ENCODE measurements at regions of chr2 and their contacts with region 1.

Region 1: DNA sequence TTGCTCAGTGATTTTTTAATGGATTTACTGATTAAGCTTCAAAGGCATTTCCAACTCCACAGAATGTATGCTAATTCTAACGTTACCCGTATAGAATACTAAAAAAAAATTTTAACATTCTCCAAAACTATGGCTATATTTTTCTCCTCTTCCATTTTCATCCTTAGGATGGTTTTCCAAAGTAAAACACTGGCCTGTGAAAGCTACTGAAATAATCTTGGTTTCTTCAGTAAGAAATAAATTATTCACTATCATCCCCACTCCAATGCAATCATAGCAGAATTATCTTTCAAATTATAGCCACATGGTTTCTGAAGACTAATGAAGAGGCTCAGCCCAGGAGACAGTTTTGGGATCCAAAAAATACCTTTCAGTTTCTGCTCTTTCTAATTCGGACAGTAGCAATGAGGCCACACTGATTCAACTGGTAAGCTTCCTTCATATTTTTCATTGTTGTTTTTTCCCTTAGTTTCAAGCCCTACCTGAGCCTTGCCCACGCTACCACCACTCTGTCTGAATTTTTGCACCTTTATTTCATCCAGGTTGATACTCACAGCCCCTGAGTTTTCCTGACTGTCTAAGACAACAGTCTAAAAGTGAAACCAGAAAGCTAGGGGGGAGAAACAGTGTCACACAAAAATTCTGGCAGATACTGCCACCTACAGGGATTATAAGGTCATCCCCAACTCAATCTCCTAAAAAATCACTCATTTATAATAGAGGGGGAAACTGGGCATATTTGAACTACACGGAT is 887.9 kb downstream of the NRXN1 start:
- DNase-seq: peak in 2 of 6 donors; percentile 13
- ATAC-seq: peak; percentile 83 to 99 (median 96)
- H3K4me3 ChIP-seq: peak overlapping the region in 2 of 4 donors; percentile 16 to 37
- H3K27ac ChIP-seq: no peak overlapping the region
- H3K4me1 ChIP-seq: no peaks in the 10 kb centered on the region
- H3K27me3 ChIP-seq: no peaks in the 10 kb centered on the region
- CTCF ChIP-seq: peak; percentile 16 to 51 (median 23)

Region 2: DNA sequence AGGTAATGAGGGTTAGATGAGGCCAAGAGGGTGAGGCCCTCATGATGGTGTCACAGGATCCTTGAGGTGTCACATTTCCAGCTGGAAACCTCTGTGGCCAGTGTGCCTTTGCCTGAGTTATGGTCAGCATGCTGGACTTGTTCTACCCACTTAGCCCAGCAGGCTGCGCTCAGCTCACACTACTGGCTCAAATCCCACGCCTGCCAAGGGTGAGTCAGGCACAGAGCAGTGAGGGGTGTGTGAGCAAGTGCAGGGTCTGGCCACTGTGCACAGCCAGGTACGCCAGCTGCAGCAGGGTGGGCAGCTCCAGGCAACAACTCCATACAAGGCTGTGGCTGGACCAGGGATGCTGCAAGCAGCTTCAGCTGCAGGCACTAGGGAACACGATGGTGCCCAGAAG is 373.1 kb before region 1 on chr2:
- intact Hi-C with region 1: loop called in 1 of 3 experiments (anchors 10 kb)
- DNase-seq: peak; percentile 25 to 75 (median 62)
- ATAC-seq: peak; percentile 78 to 95 (median 94)
- H3K4me3 ChIP-seq: no peak overlapping the region
- H3K27ac ChIP-seq: no peak overlapping the region
- H3K4me1 ChIP-seq: no peaks in the 10 kb centered on the region
- H3K27me3 ChIP-seq: no peaks in the 10 kb centered on the region
- CTCF ChIP-seq: peak in 3 of 4 donors; percentile 14 to 39 (median 33)

Region 3: GRCh38 chr2:50333529-50334228 is 189.7 kb after region 1 on chr2:
- intact Hi-C with region 1: no loop called
- DNase-seq: no peak
- ATAC-seq: no peak
- H3K4me3 ChIP-seq: no peak overlapping the region
- H3K27ac ChIP-seq: no peak overlapping the region
- H3K4me1 ChIP-seq: no peaks in the 10 kb centered on the region
- H3K27me3 ChIP-seq: peaks cover 0 to 6% (median 0%) of the 10 kb centered on the region in 4 donors
- CTCF ChIP-seq: no peak

Region 4: GRCh38 chr2:50358586-50358985 is 214.6 kb after region 1 on chr2:
- intact Hi-C with region 1: no loop called
- DNase-seq: peak in 2 of 6 donors; percentile 10 to 56
- ATAC-seq: no peak
- H3K4me3 ChIP-seq: no peak overlapping the region
- H3K27ac ChIP-seq: no peak overlapping the region
- H3K4me1 ChIP-seq: no peaks in the 10 kb centered on the region
- H3K27me3 ChIP-seq: no peaks in the 10 kb centered on the region
- CTCF ChIP-seq: no peak

Measured in pancreas (tissue), 10 donors.